Activated T-helper 1 cell treated with anti-CD3 and anti-CD28 coated beads, Interleukin-12 subunit alpha, Interleukin-12 subunit beta, Interleukin-2, Interleukin-4 antibody, amounts not matched to agents 30 ng/mL and 10 ng/mL and 1 ng/mL, durations not matched to agents 14 hours and 24 hours and 36 hours (primary cell): ENCODE measurements at regions of chr20 and their contacts with region 1.

Region 1: GRCh38 chr20:43749734-43750294 is 23.0 kb upstream of the GTSF1L start:
- DNase-seq: peak; percentile 75
- H3K4me3 Mint-ChIP-seq: no peak overlapping the region
- H3K27ac Mint-ChIP-seq: peak overlapping the region; percentile 87
- H3K4me1 Mint-ChIP-seq: peaks cover 43% of the 10 kb centered on the region
- H3K27me3 Mint-ChIP-seq: no peaks in the 10 kb centered on the region

Region 2: GRCh38 chr20:43590392-43591323 is 159.2 kb before region 1 on chr20 and contains the start of gene IFT52:
- intact Hi-C with region 1: loop called (anchors 2 kb)
- DNase-seq: peak; percentile 85
- H3K4me3 Mint-ChIP-seq: peak within 1 kb of the TSS; percentile 91
- H3K27ac Mint-ChIP-seq: peak within 1 kb of the TSS; percentile 95
- H3K4me1 Mint-ChIP-seq: peaks cover 22% of the 10 kb centered on the region
- H3K27me3 Mint-ChIP-seq: peaks cover 2% of the 10 kb centered on the region
- total RNA-seq, gene IFT52: 18.3 and 18.7 TPM in 2 replicates

Region 3: DNA sequence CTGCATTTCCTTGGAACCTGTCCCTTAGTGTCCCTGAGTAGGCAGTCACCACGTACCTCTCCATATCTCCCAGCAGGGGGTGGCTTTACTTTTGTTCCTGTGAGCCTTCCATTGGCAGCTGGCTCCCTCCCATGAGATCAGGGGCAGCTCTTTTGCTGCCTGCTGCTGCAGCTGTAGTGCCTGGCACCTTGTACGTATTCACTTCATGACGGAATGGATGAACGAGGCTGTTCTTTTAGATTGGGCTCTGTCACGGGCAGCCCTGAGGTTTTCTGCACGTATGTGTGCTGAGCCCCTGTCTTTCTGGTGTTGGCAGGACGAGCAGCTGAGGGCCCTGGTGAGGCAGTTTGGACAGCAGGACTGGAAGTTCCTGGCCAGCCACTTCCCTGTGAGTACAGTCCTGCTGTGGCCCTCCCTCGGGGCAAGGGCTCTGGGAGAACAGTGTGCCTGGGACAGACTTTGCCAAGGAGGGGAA is 68.3 kb before region 1 on chr20:
- intact Hi-C with region 1: no loop called
- DNase-seq: no peak
- H3K4me3 Mint-ChIP-seq: no peak overlapping the region
- H3K27ac Mint-ChIP-seq: peak overlapping the region; percentile 5
- H3K4me1 Mint-ChIP-seq: peaks cover 21% of the 10 kb centered on the region
- H3K27me3 Mint-ChIP-seq: no peaks in the 10 kb centered on the region

Region 4: GRCh38 chr20:43736588-43737158 is 13.1 kb before region 1 on chr20:
- intact Hi-C with region 1: loop called (anchors 1 kb)
- DNase-seq: peak; percentile 53
- H3K4me3 Mint-ChIP-seq: no peak overlapping the region
- H3K27ac Mint-ChIP-seq: peak overlapping the region; percentile 73
- H3K4me1 Mint-ChIP-seq: peaks cover 44% of the 10 kb centered on the region
- H3K27me3 Mint-ChIP-seq: no peaks in the 10 kb centered on the region

Region 5: GRCh38 chr20:43914311-43915210 is 164.7 kb after region 1 on chr20 and contains the start of gene TOX2:
- intact Hi-C with region 1: loop called (anchors 1 kb)
- DNase-seq: peak; percentile 42
- H3K4me3 Mint-ChIP-seq: peak within 1 kb of the TSS; percentile 87
- H3K27ac Mint-ChIP-seq: peak within 1 kb of the TSS; percentile 81
- H3K4me1 Mint-ChIP-seq: peaks cover 29% of the 10 kb centered on the region
- H3K27me3 Mint-ChIP-seq: peaks cover 37% of the 10 kb centered on the region
- total RNA-seq, gene TOX2: 4.0 and 4.8 TPM in 2 replicates

Region 6: GRCh38 chr20:43949741-43950618 is 200.2 kb after region 1 on chr20:
- intact Hi-C with region 1: loop called (anchors 1 kb)
- DNase-seq: peak; percentile 77
- H3K4me3 Mint-ChIP-seq: peak overlapping the region; percentile 43
- H3K27ac Mint-ChIP-seq: peak overlapping the region; percentile 30
- H3K4me1 Mint-ChIP-seq: peaks cover 71% of the 10 kb centered on the region
- H3K27me3 Mint-ChIP-seq: peaks cover 12% of the 10 kb centered on the region

Region 7: GRCh38 chr20:44080646-44081267 is 330.9 kb after region 1 on chr20:
- intact Hi-C with region 1: loop called (anchors 1 kb)
- DNase-seq: peak; percentile 55
- H3K4me3 Mint-ChIP-seq: no peak overlapping the region
- H3K27ac Mint-ChIP-seq: no peak overlapping the region
- H3K4me1 Mint-ChIP-seq: peaks cover 31% of the 10 kb centered on the region
- H3K27me3 Mint-ChIP-seq: peaks cover 4% of the 10 kb centered on the region